Endothelial cell of umbilical vein (primary cell): ENCODE measurements at regions of chr7 and their contacts with region 1.

Region 1: GRCh38 chr7:112414855-112415490 is 35.3 kb upstream of the IFRD1 start:
- DNase-seq: peak; percentile 63
- H3K4me3 ChIP-seq: no peak overlapping the region
- H3K27ac ChIP-seq: no peak overlapping the region
- H3K4me1 ChIP-seq: no peaks in the 10 kb centered on the region
- H3K27me3 ChIP-seq: no peaks in the 10 kb centered on the region
- CTCF ChIP-seq: peak; percentile 54 to 64
- POLR2A ChIP-seq: no peak

Region 2: GRCh38 chr7:111752022-111752582 is 662.9 kb before region 1 on chr7:
- CTCF ChIA-PET with region 1: interaction called, 4 read pairs
- POLR2A ChIA-PET with region 1: no interaction called
- dilution Hi-C with region 1: loop called (anchors 25 kb)
- intact Hi-C with region 1: loop called (anchors 2 kb)
- DNase-seq: peak; percentile 63
- H3K4me3 ChIP-seq: no peak overlapping the region
- H3K27ac ChIP-seq: no peak overlapping the region
- H3K4me1 ChIP-seq: no peaks in the 10 kb centered on the region
- H3K27me3 ChIP-seq: no peaks in the 10 kb centered on the region
- CTCF ChIP-seq: peak; percentile 85 to 89
- POLR2A ChIP-seq: no peak

Region 3: GRCh38 chr7:111763221-111763801 is 651.7 kb before region 1 on chr7:
- CTCF ChIA-PET with region 1: interaction called, 6 read pairs
- POLR2A ChIA-PET with region 1: no interaction called
- dilution Hi-C with region 1: loop called (anchors 25 kb)
- intact Hi-C with region 1: loop called (anchors 1 kb)
- DNase-seq: peak; percentile 46
- H3K4me3 ChIP-seq: no peak overlapping the region
- H3K27ac ChIP-seq: no peak overlapping the region
- H3K4me1 ChIP-seq: no peaks in the 10 kb centered on the region
- H3K27me3 ChIP-seq: no peaks in the 10 kb centered on the region
- CTCF ChIP-seq: peak; percentile 15 to 39
- POLR2A ChIP-seq: no peak

Region 4: DNA sequence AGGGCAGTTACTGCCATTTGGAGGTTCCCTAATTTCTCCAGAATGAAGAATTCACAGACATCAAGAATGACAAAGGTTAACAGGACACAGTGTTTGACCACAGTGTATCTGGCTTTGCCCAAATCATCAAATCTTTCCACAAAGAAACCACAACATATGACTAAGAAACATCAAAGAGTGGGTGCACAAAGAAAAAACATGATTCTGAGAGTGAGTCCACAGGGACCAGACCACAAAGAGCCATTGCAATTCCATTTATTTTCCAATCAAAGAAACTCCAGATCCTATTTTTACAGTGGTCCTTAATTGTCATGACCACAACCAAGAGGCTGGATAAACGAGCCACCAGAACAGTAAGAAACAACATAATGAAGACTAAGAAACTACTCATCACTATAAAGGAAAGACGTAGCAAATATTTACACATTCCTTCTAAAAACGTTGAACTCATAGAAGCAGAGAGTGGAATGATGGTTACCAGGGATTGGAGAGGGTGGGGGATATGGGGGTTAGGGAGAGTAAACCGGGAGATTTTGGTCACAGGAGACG is 495.3 kb before region 1 on chr7:
- CTCF ChIA-PET with region 1: no interaction called
- POLR2A ChIA-PET with region 1: no interaction called
- dilution Hi-C with region 1: no loop called
- intact Hi-C with region 1: loop called (anchors 10 kb)
- DNase-seq: no peak
- H3K4me3 ChIP-seq: no peak overlapping the region
- H3K27ac ChIP-seq: no peak overlapping the region
- H3K4me1 ChIP-seq: no peaks in the 10 kb centered on the region
- H3K27me3 ChIP-seq: no peaks in the 10 kb centered on the region
- CTCF ChIP-seq: no peak
- POLR2A ChIP-seq: no peak

Region 5: DNA sequence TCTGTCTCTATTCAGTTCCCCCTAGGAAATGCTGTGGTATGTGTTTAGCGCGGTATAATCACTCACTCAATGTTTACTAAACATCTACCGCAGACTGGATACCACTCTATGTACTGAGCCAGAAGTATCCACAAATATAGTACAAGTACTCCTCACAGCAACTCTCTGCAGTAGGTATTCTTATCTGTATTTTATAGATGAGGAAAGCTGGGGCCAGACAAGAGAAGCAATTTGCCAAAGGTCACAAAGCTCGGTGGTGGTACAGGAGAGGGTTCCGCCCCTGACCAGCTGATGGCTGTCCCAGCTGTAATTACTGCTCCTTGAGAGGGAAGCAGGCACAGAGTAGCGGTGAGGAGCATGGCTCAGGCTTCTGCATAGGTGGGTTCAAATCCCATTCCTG is 392.8 kb before region 1 on chr7:
- CTCF ChIA-PET with region 1: interaction called, 3 read pairs
- POLR2A ChIA-PET with region 1: no interaction called
- dilution Hi-C with region 1: no loop called
- intact Hi-C with region 1: loop called (anchors 10 kb)
- DNase-seq: no peak
- H3K4me3 ChIP-seq: no peak overlapping the region
- H3K27ac ChIP-seq: peak overlapping the region; percentile 97
- H3K4me1 ChIP-seq: peaks cover 43% of the 10 kb centered on the region
- H3K27me3 ChIP-seq: no peaks in the 10 kb centered on the region
- CTCF ChIP-seq: no peak
- POLR2A ChIP-seq: no peak

Region 6: DNA sequence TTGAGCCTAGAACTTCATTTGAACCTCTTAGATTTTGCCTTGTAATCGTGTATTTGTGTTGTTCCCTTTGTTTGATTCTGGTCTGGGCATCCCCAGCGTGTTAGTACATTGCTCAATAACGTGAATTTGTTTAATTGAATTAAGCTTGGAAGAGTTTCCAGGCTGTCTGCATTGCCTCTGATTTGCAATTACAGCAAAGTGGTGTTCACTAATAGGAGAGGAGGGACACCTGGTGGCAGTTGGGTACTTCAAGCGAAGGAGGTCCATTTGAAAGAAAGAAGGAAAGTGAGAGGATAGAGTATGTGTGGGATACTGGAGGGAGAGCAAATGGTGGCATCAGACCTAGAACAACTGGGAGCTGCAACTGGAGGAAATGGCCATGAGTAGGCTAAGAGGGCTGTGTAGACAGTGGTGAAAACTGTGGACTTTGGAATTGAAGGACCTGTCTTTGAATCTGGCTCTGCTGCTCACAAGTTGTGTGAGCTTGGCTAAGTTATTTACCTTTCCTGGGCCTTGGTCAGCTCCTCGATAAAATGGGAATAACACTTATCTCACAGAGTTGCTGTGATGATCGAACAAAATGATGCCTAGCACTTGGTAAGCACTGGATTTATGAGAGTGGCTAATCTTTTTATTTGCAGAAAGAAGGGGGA is 81.0 kb after region 1 on chr7:
- CTCF ChIA-PET with region 1: interaction called, 10 read pairs
- POLR2A ChIA-PET with region 1: no interaction called
- dilution Hi-C with region 1: no loop called
- intact Hi-C with region 1: loop called (anchors 1 kb)
- DNase-seq: peak; percentile 75
- H3K4me3 ChIP-seq: no peak overlapping the region
- H3K27ac ChIP-seq: no peak overlapping the region
- H3K4me1 ChIP-seq: no peaks in the 10 kb centered on the region
- H3K27me3 ChIP-seq: peaks cover 0 to 4% of the 10 kb centered on the region in 2 experiments
- CTCF ChIP-seq: peak; percentile 45 to 58
- POLR2A ChIP-seq: no peak